ENCODE measurements at regions of chr16 and their contacts with region 1.

Region 1: DNA sequence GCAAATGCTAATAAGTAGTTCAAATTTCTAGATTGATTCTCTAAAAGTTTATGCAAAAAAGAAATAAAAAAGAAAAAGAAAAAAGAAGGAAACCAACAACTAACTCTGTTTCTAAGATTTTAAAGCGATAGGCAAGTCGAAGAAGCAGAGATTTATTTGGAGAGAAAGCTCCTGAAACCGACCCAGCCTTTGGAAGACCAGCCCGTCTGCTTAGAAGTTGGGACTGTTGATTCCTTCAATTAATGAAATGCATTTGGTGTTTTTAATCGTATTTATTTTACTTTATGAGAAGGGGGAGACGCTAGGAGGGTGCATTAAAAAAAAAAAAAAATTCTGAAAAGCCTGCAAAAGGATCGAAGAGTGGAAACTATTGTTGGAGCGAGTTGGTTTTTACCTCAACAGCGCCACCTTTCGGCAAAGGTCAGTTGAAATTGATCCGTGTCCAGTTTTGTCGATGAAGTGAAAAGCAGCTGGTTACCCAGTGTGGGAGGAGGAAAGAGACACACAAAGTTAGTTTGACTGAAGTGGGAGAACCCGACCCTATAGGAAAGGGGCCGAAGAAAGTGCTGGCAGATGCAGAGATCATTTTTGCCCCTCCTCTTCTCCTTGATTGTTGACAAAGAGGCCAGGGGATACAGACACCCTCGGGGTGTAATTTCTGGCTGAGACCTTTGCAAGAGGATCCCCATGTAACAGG is 1.5 kb upstream of the MAF start:
- DNase-seq: peak; percentile 63 to 88
- ATAC-seq: peak; percentile 8 to 68 (median 51)
- H3K4me3 ChIP-seq: peak overlapping the region; percentile 57 to 85 (median 72)
- H3K27ac ChIP-seq: peak overlapping the region; percentile 64 to 96 (median 92)
- H3K4me1 ChIP-seq: peaks cover 0 to 19% (median 6%) of the 10 kb centered on the region in 9 donors
- H3K27me3 ChIP-seq: peaks cover 0 to 5% (median 0%) of the 10 kb centered on the region in 7 donors
- CTCF ChIP-seq: peak; percentile 68 to 85 (median 80)

Region 2: GRCh38 chr16:78446992-78447563 is 1155.0 kb before region 1 on chr16:
- intact Hi-C with region 1: no loop called
- DNase-seq: no peak
- ATAC-seq: no peak
- H3K4me3 ChIP-seq: no peak overlapping the region
- H3K27ac ChIP-seq: no peak overlapping the region
- H3K4me1 ChIP-seq: peaks cover 0 to 11% (median 0%) of the 10 kb centered on the region in 9 donors
- H3K27me3 ChIP-seq: no peaks in the 10 kb centered on the region
- CTCF ChIP-seq: no peak

Region 3: GRCh38 chr16:78503602-78504001 is 1098.5 kb before region 1 on chr16:
- intact Hi-C with region 1: loop called in 9 of 10 experiments (anchors 2 to 10 kb)
- DNase-seq: peak in 1 of 2 donors; percentile 79
- ATAC-seq: no peak
- H3K4me3 ChIP-seq: no peak overlapping the region
- H3K27ac ChIP-seq: no peak overlapping the region
- H3K4me1 ChIP-seq: peaks cover 0 to 54% (median 17%) of the 10 kb centered on the region in 9 donors
- H3K27me3 ChIP-seq: no peaks in the 10 kb centered on the region
- CTCF ChIP-seq: peak; percentile 79 to 93 (median 89)

Region 4: DNA sequence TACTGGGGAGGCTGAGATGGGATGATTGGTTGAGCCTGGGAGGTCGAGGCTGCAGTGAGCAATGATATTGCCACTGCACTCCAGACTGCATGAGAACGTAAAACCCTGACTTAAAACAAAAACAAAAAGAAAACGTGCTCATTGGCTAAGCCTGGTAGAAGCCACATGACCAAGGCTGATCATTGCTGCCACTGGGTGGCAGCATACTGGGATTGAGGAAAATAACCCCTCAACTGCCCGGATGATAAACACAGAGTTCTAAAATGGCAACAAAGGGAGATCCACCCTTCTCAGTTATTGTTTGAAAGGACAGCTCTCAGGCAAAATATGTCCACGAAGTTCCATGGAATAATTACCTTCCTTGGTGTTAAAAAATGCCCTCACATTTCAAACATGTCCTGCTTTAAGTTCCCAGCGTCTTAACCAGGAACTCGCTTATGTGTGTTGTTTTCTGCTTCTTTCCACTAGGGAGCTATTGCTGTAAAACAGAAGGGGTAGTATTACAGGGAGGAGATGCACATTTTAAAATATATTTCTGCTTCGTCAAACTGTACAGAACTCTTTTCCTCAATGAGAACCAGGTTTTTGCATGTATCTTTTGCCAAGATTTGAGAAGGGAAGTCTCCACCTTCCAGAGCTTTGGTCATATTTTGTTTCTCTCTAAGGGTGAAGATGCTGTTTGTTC is 676.9 kb before region 1 on chr16:
- intact Hi-C with region 1: loop called in 5 of 10 experiments (anchors 5 to 10 kb)
- DNase-seq: peak; percentile 16 to 23
- ATAC-seq: peak in 2 of 8 donors; percentile 41 to 58
- H3K4me3 ChIP-seq: no peak overlapping the region
- H3K27ac ChIP-seq: no peak overlapping the region
- H3K4me1 ChIP-seq: no peaks in the 10 kb centered on the region
- H3K27me3 ChIP-seq: no peaks in the 10 kb centered on the region
- CTCF ChIP-seq: peak in 8 of 9 donors; percentile 11 to 72 (median 54)

Region 5: GRCh38 chr16:79451196-79451816 is 150.8 kb before region 1 on chr16:
- intact Hi-C with region 1: loop called in 1 of 10 experiments (anchors 10 kb)
- DNase-seq: no peak
- ATAC-seq: peak in 5 of 8 donors; percentile 35 to 49 (median 42)
- H3K4me3 ChIP-seq: no peak overlapping the region
- H3K27ac ChIP-seq: peak overlapping the region in 2 of 10 donors; percentile 5 to 71
- H3K4me1 ChIP-seq: peaks cover 0 to 22% (median 0%) of the 10 kb centered on the region in 9 donors
- H3K27me3 ChIP-seq: peaks cover 0 to 5% (median 0%) of the 10 kb centered on the region in 7 donors
- CTCF ChIP-seq: no peak

Region 6: DNA sequence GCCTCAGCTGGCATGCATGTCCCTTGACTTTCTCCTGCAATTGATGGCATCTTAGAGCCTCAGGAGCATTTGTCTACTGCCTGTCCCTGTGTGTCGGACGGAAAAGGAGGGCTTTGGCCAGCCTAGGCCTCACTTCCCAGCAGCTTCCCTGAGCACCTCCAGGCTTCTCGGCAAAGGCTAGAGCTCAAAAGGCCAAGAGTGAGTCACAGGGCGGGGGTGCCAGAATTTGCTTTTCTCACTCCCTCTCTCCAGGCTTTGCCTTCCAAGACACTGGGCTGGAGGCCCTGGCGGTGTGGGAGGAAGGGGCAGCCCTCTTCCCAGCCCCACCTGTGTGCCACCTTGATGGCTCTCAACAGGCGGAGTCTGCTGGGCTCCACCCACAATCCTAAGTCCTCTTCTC is 105.8 kb after region 1 on chr16:
- intact Hi-C with region 1: no loop called
- DNase-seq: peak; percentile 54 to 59
- ATAC-seq: peak; percentile 69 to 96 (median 86)
- H3K4me3 ChIP-seq: no peak overlapping the region
- H3K27ac ChIP-seq: peak overlapping the region in 5 of 10 donors; percentile 20 to 55 (median 34)
- H3K4me1 ChIP-seq: peaks cover 0 to 4% (median 0%) of the 10 kb centered on the region in 9 donors
- H3K27me3 ChIP-seq: no peaks in the 10 kb centered on the region
- CTCF ChIP-seq: no peak

Region 7: DNA sequence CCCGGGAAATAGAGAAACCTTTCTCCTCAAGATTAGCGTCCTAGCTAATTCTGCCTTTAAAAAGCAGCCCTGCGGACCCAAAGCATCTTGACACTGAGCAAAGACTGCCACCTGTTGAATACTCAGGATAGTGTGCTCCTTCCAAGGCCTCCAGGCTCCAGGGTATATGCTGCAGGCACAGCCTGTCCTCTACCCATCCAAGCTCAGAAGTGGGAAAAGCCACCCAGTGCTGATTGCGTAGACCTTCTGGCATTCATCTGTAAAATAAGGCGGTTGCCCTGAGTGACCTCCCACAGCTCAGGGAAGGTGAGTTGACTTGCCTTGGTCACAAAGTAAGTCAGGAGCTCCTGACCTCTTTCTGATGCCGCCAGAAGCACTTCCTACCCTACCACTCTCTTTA is 482.6 kb after region 1 on chr16:
- intact Hi-C with region 1: loop called in 5 of 10 experiments (anchors 5 to 10 kb)
- DNase-seq: peak; percentile 10 to 46
- ATAC-seq: peak; percentile 59 to 97 (median 90)
- H3K4me3 ChIP-seq: no peak overlapping the region
- H3K27ac ChIP-seq: no peak overlapping the region
- H3K4me1 ChIP-seq: peaks cover 0 to 4% (median 0%) of the 10 kb centered on the region in 9 donors
- H3K27me3 ChIP-seq: no peaks in the 10 kb centered on the region
- CTCF ChIP-seq: peak; percentile 37 to 74 (median 66)

Measured in heart right ventricle (tissue), 16 donors.